Activated B cell treated with CpG ODN at 0.5 μM for 24 hours (primary cell): ENCODE measurements at regions of chr2 and their contacts with region 1.

Region 1: GRCh38 chr2:233061591-233062450 is 1.7 kb downstream of the INPP5D start:
- DNase-seq: peak; percentile 43
- ATAC-seq: peak; percentile 38
- H3K4me3 Mint-ChIP-seq: peak overlapping the region; percentile 96
- H3K27ac Mint-ChIP-seq: peak overlapping the region; percentile 87
- H3K4me1 Mint-ChIP-seq: peaks cover 64% of the 10 kb centered on the region
- H3K27me3 Mint-ChIP-seq: no peaks in the 10 kb centered on the region
- CTCF ChIP-seq: no peak

Region 2: DNA sequence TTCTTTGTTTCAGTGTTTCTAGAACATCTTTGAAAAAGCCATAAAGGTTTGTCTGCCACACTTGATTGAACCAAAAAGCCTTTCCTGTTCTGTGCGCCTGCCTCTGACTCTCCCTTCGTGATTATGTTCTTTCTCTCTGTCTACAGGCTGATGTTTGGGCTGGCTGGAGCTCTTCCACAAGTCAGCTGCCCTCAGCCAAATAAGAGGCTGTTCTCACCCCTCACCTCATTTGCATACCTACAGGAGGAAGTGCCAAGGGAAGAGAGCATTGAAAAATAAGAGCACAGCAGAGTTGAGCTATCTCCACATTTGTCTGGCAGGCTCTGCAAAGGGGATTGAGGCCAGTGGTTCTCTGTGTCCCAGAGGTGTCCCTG is 14.1 kb after region 1 on chr2:
- CTCF ChIA-PET with region 1: interaction called, 24 read pairs
- POLR2A ChIA-PET with region 1: interaction called, 270 read pairs
- intact Hi-C with region 1: loop called (anchors 1 kb)
- DNase-seq: no peak
- ATAC-seq: peak; percentile 73
- H3K4me3 Mint-ChIP-seq: no peak overlapping the region
- H3K27ac Mint-ChIP-seq: no peak overlapping the region
- H3K4me1 Mint-ChIP-seq: peaks cover 47% of the 10 kb centered on the region
- H3K27me3 Mint-ChIP-seq: no peaks in the 10 kb centered on the region
- CTCF ChIP-seq: no peak

Region 3: DNA sequence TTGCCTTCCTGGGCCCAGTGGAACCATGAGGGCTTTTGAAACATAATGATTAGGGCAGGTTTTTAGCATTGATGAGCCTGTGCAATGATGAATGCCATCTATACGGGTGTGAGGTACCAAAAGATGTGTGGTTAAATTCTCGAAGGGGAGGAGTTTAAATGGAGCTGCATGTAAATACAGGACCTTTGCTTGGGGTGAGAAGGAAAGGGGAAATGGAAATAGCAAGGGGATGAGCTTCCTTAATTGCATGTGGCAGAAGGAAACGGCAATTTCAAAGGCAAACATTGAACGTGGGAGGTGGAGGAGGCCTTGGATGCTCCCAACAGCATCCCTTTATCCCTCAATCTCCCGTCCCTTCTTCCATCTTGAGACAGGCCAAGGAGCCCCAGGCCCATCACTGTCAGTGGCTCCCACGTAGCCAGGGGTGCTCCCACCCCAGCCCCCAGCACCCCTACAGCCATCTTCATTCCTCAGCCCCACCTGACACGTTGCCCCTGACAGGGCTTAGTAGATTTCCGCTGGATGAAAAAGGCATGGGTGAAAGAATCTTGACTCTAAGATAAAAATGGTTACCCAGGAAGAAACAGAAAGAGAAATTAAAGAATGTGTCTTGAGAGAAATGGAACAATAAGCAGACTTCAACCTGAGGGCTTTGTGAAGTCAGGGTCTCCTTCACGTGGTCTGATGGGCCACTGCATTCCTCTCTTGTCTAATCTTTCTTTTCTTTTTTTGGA is 30.8 kb after region 1 on chr2:
- CTCF ChIA-PET with region 1: interaction called, 5 read pairs
- POLR2A ChIA-PET with region 1: interaction called, 308 read pairs
- intact Hi-C with region 1: loop called (anchors 1 kb)
- DNase-seq: peak; percentile 18
- ATAC-seq: peak; percentile 76
- H3K4me3 Mint-ChIP-seq: peak overlapping the region; percentile 79
- H3K27ac Mint-ChIP-seq: peak overlapping the region; percentile 87
- H3K4me1 Mint-ChIP-seq: peaks cover 92% of the 10 kb centered on the region
- H3K27me3 Mint-ChIP-seq: no peaks in the 10 kb centered on the region
- CTCF ChIP-seq: no peak

Region 4: GRCh38 chr2:233124421-233125080 is 62.7 kb after region 1 on chr2:
- CTCF ChIA-PET with region 1: interaction called, 15 read pairs
- POLR2A ChIA-PET with region 1: interaction called, 87 read pairs
- intact Hi-C with region 1: loop called (anchors 1 kb)
- DNase-seq: peak; percentile 73
- ATAC-seq: peak; percentile 97
- H3K4me3 Mint-ChIP-seq: peak overlapping the region; percentile 78
- H3K27ac Mint-ChIP-seq: peak overlapping the region; percentile 92
- H3K4me1 Mint-ChIP-seq: peaks cover 52% of the 10 kb centered on the region
- H3K27me3 Mint-ChIP-seq: no peaks in the 10 kb centered on the region
- CTCF ChIP-seq: no peak

Region 5: GRCh38 chr2:233142355-233142897 is 80.6 kb after region 1 on chr2:
- CTCF ChIA-PET with region 1: interaction called, 3 read pairs
- POLR2A ChIA-PET with region 1: interaction called, 19 read pairs
- intact Hi-C with region 1: loop called (anchors 1 kb)
- DNase-seq: peak; percentile 30
- ATAC-seq: peak; percentile 83
- H3K4me3 Mint-ChIP-seq: no peak overlapping the region
- H3K27ac Mint-ChIP-seq: peak overlapping the region; percentile 78
- H3K4me1 Mint-ChIP-seq: peaks cover 30% of the 10 kb centered on the region
- H3K27me3 Mint-ChIP-seq: no peaks in the 10 kb centered on the region
- CTCF ChIP-seq: no peak

Region 6: DNA sequence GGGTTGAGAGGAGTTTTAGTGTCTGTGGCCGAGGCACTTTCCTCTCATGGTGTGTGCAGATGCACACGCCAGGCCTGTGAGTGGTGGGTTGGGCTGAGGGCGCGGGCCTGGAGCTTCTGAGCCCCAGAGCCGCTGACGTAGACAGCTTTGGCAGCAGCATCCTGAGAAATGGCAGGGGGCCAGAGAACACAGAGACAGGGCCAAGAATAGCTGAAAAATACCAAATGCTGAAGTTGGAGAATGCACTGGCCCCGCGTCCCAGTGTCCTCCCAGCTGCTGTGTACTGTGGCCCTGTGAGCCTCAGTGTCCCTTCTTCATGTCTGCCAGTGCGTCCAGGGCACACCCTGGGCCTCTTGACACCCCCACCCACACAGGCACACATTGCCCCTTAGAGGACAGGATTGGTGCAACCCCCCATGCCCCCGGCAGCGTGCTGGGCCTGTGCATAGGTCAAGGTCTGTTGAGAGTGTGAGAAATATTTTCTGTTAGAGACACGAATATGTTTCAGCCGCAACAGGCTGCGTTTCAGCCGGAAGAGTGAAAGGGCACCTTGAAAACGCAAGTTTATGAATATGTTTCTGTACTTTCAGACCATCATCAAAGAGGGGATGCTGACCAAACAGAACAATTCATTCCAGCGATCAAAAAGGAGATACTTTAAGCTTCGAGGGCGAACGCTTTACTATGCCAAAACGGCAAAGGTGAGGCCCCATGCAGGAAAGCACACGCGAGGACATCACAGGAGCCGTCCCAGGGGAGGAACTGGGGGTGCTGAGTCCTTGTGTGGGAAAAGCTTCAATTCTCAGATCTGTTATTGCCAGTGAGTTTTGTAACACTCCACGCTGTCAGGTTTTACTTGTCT is 326.1 kb after region 1 on chr2:
- CTCF ChIA-PET with region 1: no interaction called
- POLR2A ChIA-PET with region 1: no interaction called
- intact Hi-C with region 1: loop called (anchors 10 kb)
- DNase-seq: no peak
- ATAC-seq: no peak
- H3K4me3 Mint-ChIP-seq: no peak overlapping the region
- H3K27ac Mint-ChIP-seq: peak overlapping the region; percentile 95
- H3K4me1 Mint-ChIP-seq: peaks cover 63% of the 10 kb centered on the region
- H3K27me3 Mint-ChIP-seq: no peaks in the 10 kb centered on the region
- CTCF ChIP-seq: no peak